Psoas muscle (tissue), 8 donors: ENCODE measurements at regions of chr4 and their contacts with region 1.

Region 1: GRCh38 chr4:177047070-177047850 is 254.5 kb upstream of the VEGFC start:
- DNase-seq: peak; percentile 40 to 59
- ATAC-seq: peak; percentile 61 to 80 (median 76)
- H3K4me3 ChIP-seq: no peak overlapping the region
- H3K27ac ChIP-seq: no peak overlapping the region
- H3K4me1 ChIP-seq: no peaks in the 10 kb centered on the region
- H3K27me3 ChIP-seq: no peaks in the 10 kb centered on the region
- CTCF ChIP-seq: peak; percentile 80

Region 2: DNA sequence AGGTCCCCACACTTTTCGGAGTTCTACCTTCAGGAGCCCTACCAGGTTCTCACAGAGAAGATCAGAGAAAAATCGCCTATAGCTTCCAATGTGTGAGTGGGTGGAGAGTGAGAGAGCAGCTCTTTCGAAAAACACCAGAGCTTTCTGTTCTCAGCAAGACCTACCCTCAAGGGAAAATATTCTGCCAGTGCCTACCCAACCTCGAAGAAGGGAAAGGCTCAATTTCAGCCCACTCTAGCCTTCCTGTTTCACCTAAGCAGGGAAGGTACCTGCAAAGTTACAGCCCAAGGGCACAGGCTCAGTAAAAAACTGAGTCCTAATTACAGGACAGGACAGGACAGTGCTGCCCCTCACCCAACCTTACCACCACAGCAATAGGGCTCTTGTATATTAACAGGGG is 1085.7 kb before region 1 on chr4:
- intact Hi-C with region 1: no loop called
- DNase-seq: no peak
- ATAC-seq: no peak
- H3K4me3 ChIP-seq: no peak overlapping the region
- H3K27ac ChIP-seq: no peak overlapping the region
- H3K4me1 ChIP-seq: no peaks in the 10 kb centered on the region
- H3K27me3 ChIP-seq: no peaks in the 10 kb centered on the region
- CTCF ChIP-seq: no peak

Region 3: GRCh38 chr4:176377780-176378179 is 669.5 kb before region 1 on chr4:
- intact Hi-C with region 1: loop called (anchors 2 to 5 kb)
- DNase-seq: no peak
- ATAC-seq: no peak
- H3K4me3 ChIP-seq: no peak overlapping the region
- H3K27ac ChIP-seq: no peak overlapping the region
- H3K4me1 ChIP-seq: no peaks in the 10 kb centered on the region
- H3K27me3 ChIP-seq: no peaks in the 10 kb centered on the region
- CTCF ChIP-seq: peak; percentile 45

Region 4: DNA sequence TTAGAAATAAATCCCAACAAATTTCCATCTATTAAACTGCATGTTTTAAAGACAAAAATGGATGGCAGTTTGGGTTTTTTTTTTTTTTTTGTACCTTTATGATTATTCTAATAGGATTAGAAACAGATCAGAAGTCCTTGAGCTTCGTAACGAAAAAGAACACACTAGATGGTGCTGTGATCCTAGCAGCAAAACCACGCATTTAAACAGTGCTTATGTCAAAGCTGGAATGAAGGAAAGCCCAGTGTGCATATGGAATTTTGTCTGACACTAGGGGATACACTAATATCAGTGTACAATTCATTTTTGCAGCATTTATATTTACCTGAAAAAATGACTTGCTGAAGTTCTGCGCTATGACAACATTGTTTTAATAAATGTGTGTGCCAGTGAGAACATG is 483.7 kb before region 1 on chr4:
- intact Hi-C with region 1: loop called (anchors 5 to 10 kb)
- DNase-seq: no peak
- ATAC-seq: no peak
- H3K4me3 ChIP-seq: no peak overlapping the region
- H3K27ac ChIP-seq: no peak overlapping the region
- H3K4me1 ChIP-seq: peaks cover 5% of the 10 kb centered on the region
- H3K27me3 ChIP-seq: no peaks in the 10 kb centered on the region
- CTCF ChIP-seq: peak; percentile 18